Mammary epithelial cell (primary cell): ENCODE measurements at regions of chr19 and their contacts with region 1.

Region 1: DNA sequence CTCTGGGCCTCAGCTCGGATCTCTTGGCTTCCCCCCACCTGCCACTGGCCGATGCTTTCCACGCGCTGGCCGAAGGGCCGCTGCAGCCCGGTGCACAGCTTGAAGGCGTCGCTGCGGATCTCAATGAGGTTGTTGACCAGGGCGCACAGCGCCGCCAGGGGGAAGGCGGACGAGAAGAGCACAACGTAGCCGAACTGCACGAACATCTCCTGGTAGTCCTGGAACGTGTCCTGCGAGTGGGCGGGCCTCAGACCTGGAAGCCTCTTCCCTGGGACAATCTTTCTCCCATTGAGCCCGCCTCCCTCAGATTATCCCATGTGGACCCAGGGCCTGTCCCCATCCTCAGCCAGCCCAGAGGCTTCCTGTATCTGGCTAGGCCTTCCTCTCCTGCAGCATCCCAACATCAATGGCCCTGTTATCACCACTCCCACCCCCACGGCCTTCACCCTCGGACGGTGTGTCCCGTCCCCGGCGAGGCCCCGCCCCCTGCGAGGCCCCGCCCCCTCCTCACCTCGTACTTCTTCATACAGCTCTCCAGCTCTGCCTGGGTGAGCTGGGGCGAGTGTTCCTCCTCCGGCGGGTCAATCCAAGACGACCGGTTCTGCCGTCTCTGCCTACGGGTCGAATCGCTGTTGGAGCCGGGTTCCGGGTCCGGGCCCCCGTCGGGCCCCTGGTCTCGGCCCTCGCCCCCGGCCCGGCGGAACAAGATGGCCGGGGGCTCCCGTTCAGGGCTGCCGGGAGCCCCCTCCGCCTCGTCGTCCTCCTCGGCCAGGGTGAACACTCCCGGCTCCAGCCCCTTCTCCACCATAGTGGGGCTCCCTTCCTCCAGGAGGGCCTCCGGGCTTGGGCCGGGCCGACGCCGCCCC is 6.8 kb downstream of the ANO8 start:
- DNase-seq: peak; percentile 73
- H3K4me3 ChIP-seq: peak overlapping the region; percentile 43 to 51 (median 45)
- H3K27ac ChIP-seq: peak overlapping the region; percentile 19
- H3K4me1 ChIP-seq: peaks cover 48% of the 10 kb centered on the region
- H3K27me3 ChIP-seq: no peaks in the 10 kb centered on the region
- CTCF ChIP-seq: peak; percentile 65 to 86

Region 2: DNA sequence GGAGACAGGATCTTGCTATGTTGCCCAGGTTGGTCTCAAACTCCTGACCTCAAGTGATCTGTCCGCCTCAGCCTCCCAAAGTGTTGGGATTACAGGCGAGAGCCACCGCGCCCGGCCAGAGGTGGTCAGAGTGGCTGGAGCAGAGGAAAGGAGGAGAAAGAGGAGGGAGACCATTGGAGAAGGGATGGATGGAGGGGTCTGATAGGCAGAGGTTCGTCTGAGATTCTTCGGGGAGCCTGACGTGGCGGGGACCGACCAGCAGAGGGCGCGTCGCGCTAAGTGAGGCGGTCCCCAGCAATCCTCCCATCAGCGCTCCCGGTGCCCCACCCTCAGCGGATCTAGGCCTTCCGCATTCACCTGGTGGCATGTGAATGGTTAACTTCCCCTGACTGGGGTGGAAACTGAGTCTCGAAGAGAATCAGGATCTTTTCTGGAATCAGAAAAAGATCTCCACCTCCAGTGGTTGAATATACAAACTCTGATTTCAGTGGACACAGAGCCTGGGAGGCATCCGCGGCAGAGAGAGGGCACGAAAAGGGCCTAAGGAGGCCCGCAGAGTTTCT is 18.3 kb after region 1 on chr19:
- CTCF ChIA-PET with region 1: interaction called, 13 read pairs
- dilution Hi-C with region 1: no loop called
- in situ Hi-C with region 1: no loop called
- intact Hi-C with region 1: no loop called
- DNase-seq: peak; percentile 51
- H3K4me3 ChIP-seq: no peak overlapping the region
- H3K27ac ChIP-seq: no peak overlapping the region
- H3K4me1 ChIP-seq: peaks cover 7% of the 10 kb centered on the region
- H3K27me3 ChIP-seq: no peaks in the 10 kb centered on the region
- CTCF ChIP-seq: peak; percentile 78 to 94

Region 3: GRCh38 chr19:17359905-17360800 is 32.3 kb after region 1 on chr19:
- CTCF ChIA-PET with region 1: no interaction called
- dilution Hi-C with region 1: no loop called
- in situ Hi-C with region 1: no loop called
- intact Hi-C with region 1: no loop called
- DNase-seq: no peak
- H3K4me3 ChIP-seq: no peak overlapping the region
- H3K27ac ChIP-seq: no peak overlapping the region
- H3K4me1 ChIP-seq: no peaks in the 10 kb centered on the region
- H3K27me3 ChIP-seq: no peaks in the 10 kb centered on the region
- CTCF ChIP-seq: no peak

Region 4: GRCh38 chr19:17475541-17476115 is 147.7 kb after region 1 on chr19:
- CTCF ChIA-PET with region 1: no interaction called
- dilution Hi-C with region 1: no loop called
- in situ Hi-C with region 1: no loop called
- intact Hi-C with region 1: no loop called
- DNase-seq: peak; percentile 95
- H3K4me3 ChIP-seq: peak overlapping the region in 1 of 3 experiments; percentile 16
- H3K27ac ChIP-seq: peak overlapping the region; percentile 44
- H3K4me1 ChIP-seq: peaks cover 29% of the 10 kb centered on the region
- H3K27me3 ChIP-seq: no peaks in the 10 kb centered on the region
- CTCF ChIP-seq: no peak